IMR-90 (cell line): ENCODE measurements at regions of chr3 and their contacts with region 1.

Region 1: GRCh38 chr3:99505646-99506269 is 132.6 kb upstream of the COL8A1 start:
- DNase-seq: peak; percentile 96
- ATAC-seq: peak; percentile 20
- H3K4me3 ChIP-seq: no peak overlapping the region
- H3K27ac ChIP-seq: peak overlapping the region; percentile 15
- H3K4me1 ChIP-seq: peaks cover 17% of the 10 kb centered on the region
- H3K27me3 ChIP-seq: no peaks in the 10 kb centered on the region
- CTCF ChIP-seq: no peak
- POLR2A ChIP-seq: no peak
- RAD21 ChIP-seq: no peak

Region 2: GRCh38 chr3:99319961-99320360 is 185.8 kb before region 1 on chr3:
- CTCF ChIA-PET with region 1: no interaction called
- POLR2A ChIA-PET with region 1: no interaction called
- dilution Hi-C with region 1: no loop called
- in situ Hi-C with region 1: no loop called
- intact Hi-C with region 1: loop called (anchors 5 kb)
- DNase-seq: peak; percentile 94
- ATAC-seq: peak; percentile 87
- H3K4me3 ChIP-seq: no peak overlapping the region
- H3K27ac ChIP-seq: no peak overlapping the region
- H3K4me1 ChIP-seq: peaks cover 5% of the 10 kb centered on the region
- H3K27me3 ChIP-seq: peaks cover 2% of the 10 kb centered on the region
- CTCF ChIP-seq: no peak
- POLR2A ChIP-seq: no peak
- RAD21 ChIP-seq: no peak